Activated CD4-positive, alpha-beta T cell treated with anti-CD3 and anti-CD28 coated beads for 36 hours (primary cell): ENCODE measurements at regions of chr17 and their contacts with region 1.

Region 1: GRCh38 chr17:43720311-43721060 is 38.1 kb downstream of the SOST start:
- DNase-seq: peak; percentile 88
- ATAC-seq: peak; percentile 91
- H3K4me3 Mint-ChIP-seq: peak overlapping the region; percentile 78
- H3K27ac Mint-ChIP-seq: peak overlapping the region; percentile 97
- H3K4me1 Mint-ChIP-seq: peaks cover 12% of the 10 kb centered on the region
- H3K27me3 Mint-ChIP-seq: peaks cover 2% of the 10 kb centered on the region

Region 2: DNA sequence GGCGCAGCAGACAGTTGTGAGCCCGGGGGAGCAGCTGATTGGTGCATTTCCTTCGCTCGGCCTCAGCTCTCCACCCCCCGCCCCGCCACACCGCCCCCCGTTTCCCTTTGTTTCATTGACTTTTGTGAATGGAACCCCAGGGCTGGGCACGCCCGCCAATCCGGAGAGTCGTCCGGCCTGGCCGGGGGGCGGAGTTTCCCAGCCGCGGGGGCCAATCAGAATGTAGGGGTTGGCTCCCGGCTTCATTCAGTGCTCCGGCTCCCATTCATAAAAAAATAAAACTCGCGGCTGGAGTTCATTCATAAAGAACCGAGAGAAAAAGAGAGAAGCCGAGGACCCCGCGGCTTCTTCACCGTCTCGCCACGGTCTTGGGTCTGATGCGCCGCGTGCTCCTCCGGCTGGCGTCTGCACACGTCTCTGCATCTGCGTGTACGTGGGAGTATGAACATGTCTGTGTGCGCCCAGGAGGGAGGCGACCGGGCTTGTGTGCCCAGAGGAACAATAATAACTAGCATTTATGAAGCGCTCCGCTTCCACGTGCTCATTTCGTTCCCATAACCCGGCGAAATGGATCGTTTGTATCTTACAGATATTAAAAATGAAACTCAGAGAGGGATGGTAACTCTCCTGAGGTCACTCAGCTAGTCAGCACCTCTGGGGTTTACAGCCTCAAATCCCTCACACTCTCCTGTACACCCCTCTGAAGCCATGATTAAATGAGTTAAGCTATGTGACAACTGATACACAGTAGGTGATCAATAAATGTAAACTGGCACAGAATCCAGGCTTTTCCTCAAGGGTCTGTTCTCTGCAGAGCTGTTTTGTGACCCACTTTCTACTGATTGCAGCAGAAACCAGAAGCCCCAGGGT is 173.9 kb before region 1 on chr17 and contains the start of gene ETV4:
- CTCF ChIA-PET with region 1: no interaction called
- POLR2A ChIA-PET with region 1: no interaction called
- intact Hi-C with region 1: loop called in 1 of 2 experiments (anchors 1 kb)
- DNase-seq: peak; percentile 96
- ATAC-seq: peak; percentile 94
- H3K4me3 Mint-ChIP-seq: peak within 1 kb of the TSS; percentile 75
- H3K27ac Mint-ChIP-seq: peak within 1 kb of the TSS; percentile 16
- H3K4me1 Mint-ChIP-seq: peaks cover 17% of the 10 kb centered on the region
- H3K27me3 Mint-ChIP-seq: peaks cover 49% of the 10 kb centered on the region
- total RNA-seq, gene ETV4: 2.9 to 3.3 TPM

Region 3: GRCh38 chr17:43701318-43701743 is 19.2 kb before region 1 on chr17:
- CTCF ChIA-PET with region 1: interaction called, 4 read pairs
- POLR2A ChIA-PET with region 1: interaction called, 12 read pairs
- intact Hi-C with region 1: no loop called
- DNase-seq: peak; percentile 77
- ATAC-seq: peak; percentile 67
- H3K4me3 Mint-ChIP-seq: peak overlapping the region; percentile 33
- H3K27ac Mint-ChIP-seq: no peak overlapping the region
- H3K4me1 Mint-ChIP-seq: peaks cover 9% of the 10 kb centered on the region
- H3K27me3 Mint-ChIP-seq: peaks cover 18% of the 10 kb centered on the region

Region 4: GRCh38 chr17:43766413-43767052 is 46.0 kb after region 1 on chr17:
- CTCF ChIA-PET with region 1: interaction called, 11 read pairs
- POLR2A ChIA-PET with region 1: no interaction called
- intact Hi-C with region 1: no loop called
- DNase-seq: peak; percentile 73
- ATAC-seq: no peak
- H3K4me3 Mint-ChIP-seq: no peak overlapping the region
- H3K27ac Mint-ChIP-seq: no peak overlapping the region
- H3K4me1 Mint-ChIP-seq: no peaks in the 10 kb centered on the region
- H3K27me3 Mint-ChIP-seq: no peaks in the 10 kb centered on the region